Head of caudate nucleus (tissue), 42 donors: ENCODE measurements at regions of chr4 and their contacts with region 1.

Region 1: DNA sequence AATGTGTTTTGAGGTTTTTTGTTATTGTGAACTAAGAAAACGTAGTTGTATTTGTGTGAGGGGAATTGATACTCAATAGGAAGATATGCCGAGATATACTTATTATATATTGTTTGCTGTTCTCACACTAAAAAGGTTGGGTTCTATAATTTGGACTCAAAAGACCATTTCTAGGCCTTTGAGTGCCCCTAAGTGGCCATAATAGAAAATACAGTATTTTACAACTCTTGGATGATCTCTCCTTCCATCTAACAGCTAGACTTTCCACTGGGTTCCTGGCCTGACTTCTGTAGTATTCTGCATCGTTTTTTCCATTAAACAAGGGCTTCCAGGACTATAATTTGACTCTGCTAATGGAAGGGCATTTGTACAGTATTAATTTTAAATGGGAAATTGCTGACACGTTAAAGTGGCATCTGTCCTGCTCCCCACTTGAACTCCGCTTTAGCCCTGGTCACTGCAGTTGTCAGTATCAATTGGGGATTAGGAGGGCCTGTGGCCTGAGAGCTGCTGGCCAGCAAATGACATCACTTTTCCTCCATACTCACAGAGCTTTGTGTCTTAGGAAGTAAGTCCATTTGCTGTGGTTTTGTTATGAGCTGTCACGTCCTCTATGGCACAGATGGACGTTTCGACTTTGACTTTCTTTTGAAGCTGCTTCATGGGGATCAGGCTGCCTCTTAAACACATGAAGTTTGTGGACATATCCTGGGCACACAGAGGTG is 176.9 kb downstream of the SLIT2 start:
- DNase-seq: peak in 1 of 42 donors; percentile 48

Region 2: DNA sequence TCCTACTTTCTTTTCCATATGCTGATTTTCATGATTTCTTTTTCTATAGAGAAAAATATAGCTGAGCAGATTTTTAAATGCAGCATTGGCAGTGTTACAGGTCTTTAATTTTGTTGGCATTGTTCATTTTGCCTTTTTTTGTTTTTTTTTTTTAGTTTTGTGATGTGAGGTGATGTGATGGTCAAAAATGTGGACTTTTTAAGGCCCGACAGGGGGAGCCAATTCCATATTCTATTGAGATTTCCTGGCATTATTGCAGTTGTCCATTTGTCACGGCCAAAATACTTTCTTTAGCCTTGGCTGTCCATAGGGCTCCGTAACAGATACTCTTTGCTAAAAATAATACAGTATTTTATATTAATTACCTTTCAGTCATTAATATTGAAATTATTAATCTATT is 129.1 kb before region 1 on chr4:
- intact Hi-C with region 1: no loop called
- DNase-seq: peak in 7 of 42 donors; percentile 14 to 77 (median 38)

Region 3: GRCh38 chr4:20532871-20533870 is 104.6 kb after region 1 on chr4:
- intact Hi-C with region 1: loop called (anchors 10 kb)
- DNase-seq: no peak